Gastrocnemius medialis (tissue), 4 donors: ENCODE measurements at regions of chr12 and their contacts with region 1.

Region 1: DNA sequence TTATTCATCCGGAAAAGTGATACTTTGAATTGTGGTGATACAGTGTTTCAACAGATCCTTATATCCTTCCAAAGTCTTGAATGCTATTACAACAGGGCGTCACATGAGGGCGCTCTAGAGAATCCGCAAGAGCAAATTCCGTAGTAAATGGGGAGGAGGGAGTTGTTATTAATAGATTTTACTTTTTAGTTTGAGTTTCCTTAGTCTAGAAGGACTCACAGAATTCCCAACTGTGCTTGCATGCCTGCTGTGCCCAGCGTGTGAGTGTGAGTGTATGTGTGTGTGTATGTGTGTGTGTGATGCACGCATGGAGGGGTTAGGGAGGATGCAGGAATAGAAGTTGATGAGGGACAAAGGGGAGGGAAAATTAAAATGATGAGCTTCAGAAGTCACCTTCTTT is 375.3 kb downstream of the C12orf75 start:
- DNase-seq: peak in 1 of 2 donors; percentile 41
- ATAC-seq: peak; percentile 53 to 56
- H3K4me3 ChIP-seq: no peak overlapping the region
- H3K27ac ChIP-seq: peak overlapping the region; percentile 73 to 85 (median 76)
- H3K4me1 ChIP-seq: peaks cover 17 to 22% of the 10 kb centered on the region in 2 donors
- H3K27me3 ChIP-seq: no peaks in the 10 kb centered on the region
- CTCF ChIP-seq: peak; percentile 56 to 75 (median 73)
- POLR2A ChIP-seq: no peak

Region 2: DNA sequence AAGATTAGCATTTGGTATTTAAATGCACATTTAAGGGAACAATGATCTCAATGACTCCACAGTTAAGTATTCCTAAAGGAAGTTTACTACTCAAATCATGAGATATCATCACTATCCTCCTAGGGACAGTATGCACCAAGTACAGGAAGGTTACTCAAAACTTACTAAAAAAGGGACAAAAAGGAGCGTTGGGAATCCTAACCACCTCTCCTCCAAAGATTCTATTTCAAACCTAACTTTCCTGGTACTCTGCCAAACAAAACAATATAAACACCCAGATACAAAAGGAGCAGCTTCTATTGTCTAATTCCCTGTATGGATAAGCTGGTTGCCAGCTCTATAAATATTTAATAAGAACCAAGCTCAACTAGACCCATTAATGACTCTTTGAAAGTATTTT is 55.3 kb after region 1 on chr12:
- in situ Hi-C with region 1: no loop called
- intact Hi-C with region 1: no loop called
- DNase-seq: no peak
- ATAC-seq: peak in 1 of 2 donors; percentile 23
- H3K4me3 ChIP-seq: no peak overlapping the region
- H3K27ac ChIP-seq: no peak overlapping the region
- H3K4me1 ChIP-seq: no peaks in the 10 kb centered on the region
- H3K27me3 ChIP-seq: no peaks in the 10 kb centered on the region
- CTCF ChIP-seq: no peak
- POLR2A ChIP-seq: no peak

Region 3: DNA sequence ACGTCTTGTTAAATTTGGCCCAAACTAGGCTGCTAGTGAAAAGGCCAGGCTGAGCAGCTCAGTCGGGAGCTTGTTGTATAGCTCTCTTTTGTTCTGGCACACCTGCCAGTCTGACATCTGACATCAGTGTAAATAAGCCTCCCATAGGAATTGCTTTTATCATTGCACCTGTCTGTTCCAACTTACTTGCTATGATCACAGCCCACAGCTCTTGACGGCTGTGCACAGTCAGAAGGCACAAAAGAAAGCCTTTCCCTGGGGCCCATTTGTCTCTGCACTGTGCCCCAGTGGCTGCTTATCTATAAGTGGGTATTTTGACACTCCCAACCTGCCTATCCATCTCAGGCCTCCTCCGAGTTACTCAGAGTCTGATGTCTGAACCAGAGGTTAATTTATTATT is 108.5 kb after region 1 on chr12:
- in situ Hi-C with region 1: no loop called
- intact Hi-C with region 1: loop called (anchors 10 kb)
- DNase-seq: no peak
- ATAC-seq: no peak
- H3K4me3 ChIP-seq: no peak overlapping the region
- H3K27ac ChIP-seq: no peak overlapping the region
- H3K4me1 ChIP-seq: peaks cover 0 to 6% of the 10 kb centered on the region in 2 donors
- H3K27me3 ChIP-seq: no peaks in the 10 kb centered on the region
- CTCF ChIP-seq: no peak
- POLR2A ChIP-seq: no peak

Region 4: GRCh38 chr12:106205208-106206071 is 499.7 kb after region 1 on chr12:
- in situ Hi-C with region 1: no loop called
- intact Hi-C with region 1: loop called (anchors 5 kb)
- DNase-seq: peak; percentile 71 to 82
- ATAC-seq: peak; percentile 87 to 97
- H3K4me3 ChIP-seq: no peak overlapping the region
- H3K27ac ChIP-seq: peak overlapping the region; percentile 5 to 65 (median 36)
- H3K4me1 ChIP-seq: peaks cover 3 to 16% of the 10 kb centered on the region in 2 donors
- H3K27me3 ChIP-seq: no peaks in the 10 kb centered on the region
- CTCF ChIP-seq: peak; percentile 36 to 69 (median 49)
- POLR2A ChIP-seq: no peak